ENCODE measurements at regions of chr6 and their contacts with region 1.

Region 1: DNA sequence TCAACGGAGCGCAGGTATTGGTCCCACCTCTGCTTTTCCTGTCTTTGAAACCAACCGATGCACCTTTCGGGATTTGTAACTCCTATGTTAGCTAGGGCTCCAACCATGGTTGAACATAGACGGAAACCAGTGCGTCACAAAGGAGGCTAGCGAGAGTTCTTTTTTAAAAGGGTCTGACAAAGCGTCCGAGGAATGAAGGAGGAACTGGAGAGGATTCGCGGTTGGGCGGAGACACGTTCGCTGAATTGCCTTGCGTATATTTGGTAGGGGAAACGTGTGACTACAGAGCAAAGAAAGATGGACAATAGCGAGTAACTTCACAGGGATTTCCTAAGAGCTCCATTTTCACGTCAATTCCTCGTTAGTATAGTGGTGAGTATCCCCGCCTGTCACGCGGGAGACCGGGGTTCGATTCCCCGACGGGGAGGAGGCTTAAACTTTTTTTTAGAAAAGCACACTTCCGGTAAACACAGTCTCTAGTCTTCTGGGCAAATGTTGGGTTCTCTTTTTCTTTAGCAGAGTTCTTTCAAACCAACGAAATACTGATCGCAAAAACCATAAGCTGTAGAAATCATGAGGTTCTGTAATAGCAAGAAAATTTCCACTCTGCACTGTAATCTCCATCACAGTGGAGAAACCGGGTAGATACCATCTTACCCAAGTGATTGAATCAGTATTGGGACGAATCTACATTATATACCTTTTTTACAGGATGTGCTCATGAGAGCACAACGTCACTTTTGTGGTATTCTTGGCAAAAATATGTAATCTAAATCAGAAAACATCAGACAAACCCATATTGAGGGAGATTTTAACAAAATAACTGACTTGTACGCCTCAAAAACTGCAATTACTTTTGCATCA is 6.6 kb upstream of the ZNF184 start:
- DNase-seq: peak; percentile 53 to 93
- H3K4me3 ChIP-seq: peak overlapping the region; percentile 77 to 94
- H3K27ac ChIP-seq: peak overlapping the region; percentile 98 to 99
- H3K4me1 ChIP-seq: no peaks in the 10 kb centered on the region
- H3K27me3 ChIP-seq: no peaks in the 10 kb centered on the region
- CTCF ChIP-seq: no peak

Region 2: DNA sequence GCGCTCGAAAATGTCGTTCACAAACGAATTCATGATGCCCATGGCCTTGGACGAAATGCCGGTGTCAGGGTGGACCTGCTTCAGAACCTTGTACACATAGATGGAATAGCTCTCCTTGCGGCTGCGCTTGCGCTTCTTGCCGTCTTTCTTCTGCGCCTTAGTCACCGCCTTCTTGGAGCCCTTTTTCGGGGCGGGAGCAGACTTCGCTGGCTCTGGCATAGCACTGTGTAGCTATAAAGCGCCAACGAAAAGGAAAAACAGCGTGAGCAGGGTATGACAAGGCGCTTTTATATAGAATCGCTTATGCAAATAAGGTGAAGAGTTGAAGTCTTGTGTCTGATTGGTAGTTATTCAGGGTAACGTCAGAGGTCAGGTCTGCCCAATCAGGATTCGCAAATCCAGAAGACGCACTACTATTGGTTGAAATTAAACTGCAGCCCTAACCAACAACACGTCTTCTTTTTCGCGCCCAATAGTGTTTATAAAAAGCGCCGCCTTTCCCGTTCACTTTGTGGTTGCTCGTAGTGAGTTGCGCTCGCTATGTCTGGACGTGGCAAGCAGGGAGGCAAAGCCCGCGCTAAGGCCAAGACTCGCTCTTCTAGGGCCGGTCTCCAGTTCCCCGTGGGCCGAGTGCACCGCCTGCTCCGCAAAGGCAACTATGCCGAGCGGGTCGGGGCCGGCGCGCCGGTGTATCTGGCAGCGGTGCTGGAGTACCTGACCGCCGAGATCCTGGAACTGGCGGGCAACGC is 346.8 kb before region 1 on chr6:
- intact Hi-C with region 1: loop called (anchors 2 kb)
- DNase-seq: peak; percentile 82 to 97
- H3K4me3 ChIP-seq: peak overlapping the region; percentile 69 to 75
- H3K27ac ChIP-seq: peak overlapping the region; percentile 88 to 89
- H3K4me1 ChIP-seq: peaks cover 4 to 10% of the 10 kb centered on the region in 2 donors
- H3K27me3 ChIP-seq: no peaks in the 10 kb centered on the region
- CTCF ChIP-seq: no peak

Region 3: GRCh38 chr6:27503436-27504030 is 24.0 kb after region 1 on chr6:
- intact Hi-C with region 1: loop called (anchors 2 kb)
- DNase-seq: peak in 1 of 2 donors; percentile 78
- H3K4me3 ChIP-seq: peak overlapping the region; percentile 49 to 59
- H3K27ac ChIP-seq: peak overlapping the region in 1 of 2 donors; percentile 31
- H3K4me1 ChIP-seq: no peaks in the 10 kb centered on the region
- H3K27me3 ChIP-seq: no peaks in the 10 kb centered on the region
- CTCF ChIP-seq: no peak

Region 4: GRCh38 chr6:27753668-27754407 is 274.3 kb after region 1 on chr6:
- intact Hi-C with region 1: loop called (anchors 2 kb)
- DNase-seq: peak in 1 of 2 donors; percentile 81
- H3K4me3 ChIP-seq: peak overlapping the region; percentile 32 to 93
- H3K27ac ChIP-seq: no peak overlapping the region
- H3K4me1 ChIP-seq: peaks cover 0 to 3% of the 10 kb centered on the region in 2 donors
- H3K27me3 ChIP-seq: peaks cover 5% of the 10 kb centered on the region
- CTCF ChIP-seq: no peak

Region 5: DNA sequence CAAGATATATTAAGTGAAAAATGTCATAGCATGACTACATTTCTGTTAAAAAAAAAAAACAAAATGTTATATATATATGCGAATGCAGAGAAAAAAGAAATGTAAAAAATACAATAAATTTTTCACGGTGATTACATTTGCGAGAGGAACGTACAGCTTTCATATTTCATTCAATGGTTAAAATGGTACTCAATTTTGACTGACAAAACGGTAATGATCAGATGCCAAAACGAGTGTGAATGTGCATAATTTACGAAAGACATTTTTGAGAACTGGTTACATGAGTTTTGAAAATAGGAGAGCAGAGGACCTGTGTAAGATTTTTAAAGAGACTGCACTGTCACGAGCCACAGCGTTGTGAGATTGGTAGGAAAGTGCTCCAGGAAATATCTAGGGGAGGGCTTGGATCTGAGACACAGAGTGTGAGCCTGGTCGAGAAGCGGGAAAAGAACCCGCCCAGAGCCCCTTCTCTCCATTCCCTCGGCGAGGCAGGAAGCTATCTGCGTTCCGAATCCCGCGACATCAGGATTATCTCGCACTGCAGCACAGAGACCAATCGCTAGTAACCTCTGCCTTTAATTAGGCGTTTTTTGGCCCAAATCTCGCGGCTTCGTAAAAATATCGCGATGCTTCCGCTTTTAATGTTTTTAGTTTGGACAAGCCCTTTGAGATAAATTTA is 1415.7 kb after region 1 on chr6:
- intact Hi-C with region 1: loop called (anchors 5 kb)
- DNase-seq: peak; percentile 86 to 98
- H3K4me3 ChIP-seq: peak overlapping the region; percentile 60 to 72
- H3K27ac ChIP-seq: peak overlapping the region; percentile 95 to 96
- H3K4me1 ChIP-seq: no peaks in the 10 kb centered on the region
- H3K27me3 ChIP-seq: no peaks in the 10 kb centered on the region
- CTCF ChIP-seq: no peak

Measured in ascending aorta (tissue), 2 donors.